ENCODE measurements at regions of chr19 and their contacts with region 1.

Region 1: GRCh38 chr19:33052352-33052972 is 12.2 kb downstream of the RHPN2 start:
- DNase-seq: peak; percentile 53 to 95
- H3K4me3 ChIP-seq: no peak overlapping the region; the same call in 1 of the 2 replicates
- H3K27ac ChIP-seq: peak overlapping the region; percentile 98
- H3K4me1 ChIP-seq: peaks cover 95% of the 10 kb centered on the region
- H3K27me3 ChIP-seq: no peaks in the 10 kb centered on the region
- CTCF ChIP-seq: no peak

Region 2: DNA sequence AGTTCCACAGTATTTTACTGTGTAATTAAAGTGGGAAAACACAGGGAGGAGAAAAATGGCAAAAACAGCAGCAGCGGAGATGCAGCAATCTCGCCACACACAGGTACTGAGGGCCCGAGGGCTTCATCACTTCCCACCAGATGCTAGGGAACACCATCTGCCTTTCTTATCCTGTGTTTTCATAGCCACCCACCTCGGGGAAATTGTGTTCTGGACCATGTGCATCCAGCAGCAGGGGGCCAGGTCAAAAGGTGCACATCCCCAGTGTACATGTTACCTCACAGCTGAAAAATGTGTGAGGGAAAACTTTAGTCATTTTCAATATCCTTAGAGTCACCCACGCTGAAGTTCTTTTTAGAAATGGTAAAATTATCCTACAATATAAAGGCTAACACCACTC is 441.3 kb before region 1 on chr19:
- CTCF ChIA-PET with region 1: no interaction called
- POLR2A ChIA-PET with region 1: no interaction called
- intact Hi-C with region 1: no loop called
- DNase-seq: no peak
- H3K4me3 ChIP-seq: no peak overlapping the region
- H3K27ac ChIP-seq: no peak overlapping the region
- H3K4me1 ChIP-seq: no peaks in the 10 kb centered on the region
- H3K27me3 ChIP-seq: no peaks in the 10 kb centered on the region
- CTCF ChIP-seq: no peak

Region 3: DNA sequence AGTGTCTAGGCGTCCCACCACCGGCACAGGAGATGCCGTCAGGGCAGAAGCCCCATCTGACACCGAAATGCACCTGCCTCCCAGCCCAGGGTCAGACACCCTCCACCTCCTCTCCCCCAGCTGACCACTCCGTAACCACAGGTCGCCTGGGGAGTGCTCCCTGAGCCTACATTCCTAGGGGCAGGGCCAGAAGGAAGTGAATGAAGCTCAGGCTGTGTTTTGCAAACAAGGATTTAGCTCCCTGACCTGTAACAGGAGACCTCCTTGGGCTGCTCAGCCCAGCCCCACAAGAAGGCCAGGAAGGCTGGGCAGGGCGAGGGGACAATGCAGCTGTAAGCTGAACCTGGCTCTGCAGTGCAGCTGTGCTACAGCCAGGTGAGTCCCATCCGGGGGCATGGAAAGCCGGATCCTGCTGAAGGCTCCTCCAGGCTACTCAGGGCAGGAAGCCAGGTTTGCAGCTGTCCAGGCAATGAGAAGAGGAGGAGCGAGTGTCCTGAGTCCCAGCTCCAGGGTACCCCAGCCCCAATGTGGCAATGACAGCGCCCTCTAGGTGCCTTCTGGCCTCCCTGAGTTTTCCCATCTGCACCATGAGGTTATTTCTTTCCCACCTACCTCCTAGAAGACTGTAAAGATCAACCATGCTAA is 29.9 kb before region 1 on chr19:
- CTCF ChIA-PET with region 1: no interaction called
- POLR2A ChIA-PET with region 1: interaction called, 11 read pairs
- intact Hi-C with region 1: loop called (anchors 1 kb)
- DNase-seq: peak; percentile 82 to 93
- H3K4me3 ChIP-seq: no peak overlapping the region
- H3K27ac ChIP-seq: peak overlapping the region; percentile 85
- H3K4me1 ChIP-seq: peaks cover 47% of the 10 kb centered on the region
- H3K27me3 ChIP-seq: no peaks in the 10 kb centered on the region
- CTCF ChIP-seq: peak; percentile 51; the same call in 1 of the 2 replicates

Region 4: DNA sequence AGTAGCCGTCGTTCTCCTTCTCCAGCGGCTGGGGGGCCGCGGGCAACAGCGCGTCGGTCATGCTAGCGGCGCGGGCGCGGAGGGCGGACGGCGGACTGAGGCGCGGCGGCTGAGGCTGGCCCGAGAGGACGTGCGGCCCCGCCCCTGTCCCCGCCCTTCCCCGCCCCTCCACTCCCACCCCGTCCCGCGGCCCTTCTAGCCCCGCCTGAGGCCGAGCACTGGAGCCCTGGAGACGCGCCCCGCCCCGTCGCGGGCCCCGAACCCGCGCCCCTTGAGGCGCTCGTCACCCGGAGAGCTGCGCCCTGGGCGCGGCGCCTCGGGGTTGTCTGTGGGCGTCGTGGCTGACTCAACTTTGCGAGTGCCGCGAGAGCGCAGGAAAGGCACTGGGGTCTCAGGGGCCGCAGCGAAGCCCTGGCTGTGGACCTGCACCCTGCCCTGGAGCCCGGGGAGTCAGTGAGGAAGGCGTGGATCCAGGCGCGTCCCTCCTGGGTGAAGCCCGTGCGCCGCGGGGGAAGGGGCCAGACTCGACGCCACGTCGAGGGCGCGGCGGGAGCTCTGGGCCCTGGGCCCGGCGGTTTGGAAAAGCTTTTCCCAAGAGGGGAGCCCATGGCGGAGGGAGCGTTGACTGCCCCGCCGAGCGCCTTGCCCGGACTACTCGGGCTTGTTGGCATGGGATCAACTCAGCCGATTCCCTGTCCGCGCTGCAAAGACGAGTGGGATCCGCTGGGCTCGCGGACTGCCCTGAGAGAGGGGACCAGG is 12.5 kb after region 1 on chr19 and contains the start of gene RHPN2:
- CTCF ChIA-PET with region 1: no interaction called
- POLR2A ChIA-PET with region 1: interaction called, 16 read pairs
- intact Hi-C with region 1: no loop called
- DNase-seq: peak; percentile 47 to 77
- H3K4me3 ChIP-seq: peak within 1 kb of the TSS; percentile 99
- H3K27ac ChIP-seq: 0 out of 2 replicates have a peak within 1 kb of the TSS, but pooled peaks have one; percentile 4
- H3K4me1 ChIP-seq: peaks cover 36% of the 10 kb centered on the region
- H3K27me3 ChIP-seq: no peaks in the 10 kb centered on the region
- CTCF ChIP-seq: no peak
- total RNA-seq, gene RHPN2: 21.3 and 28.5 TPM in 2 replicates

Region 5: GRCh38 chr19:33098023-33098652 is 45.7 kb after region 1 on chr19:
- CTCF ChIA-PET with region 1: no interaction called
- POLR2A ChIA-PET with region 1: interaction called, 5 read pairs
- intact Hi-C with region 1: loop called (anchors 1 kb)
- DNase-seq: peak; percentile 83 to 90
- H3K4me3 ChIP-seq: no peak overlapping the region
- H3K27ac ChIP-seq: peak overlapping the region; percentile 54
- H3K4me1 ChIP-seq: peaks cover 65% of the 10 kb centered on the region
- H3K27me3 ChIP-seq: no peaks in the 10 kb centered on the region
- CTCF ChIP-seq: no peak

Region 6: GRCh38 chr19:33176670-33177416 is 124.4 kb after region 1 on chr19:
- CTCF ChIA-PET with region 1: no interaction called
- POLR2A ChIA-PET with region 1: interaction called, 3 read pairs
- intact Hi-C with region 1: loop called (anchors 10 kb)
- DNase-seq: peak; percentile 94 to 98
- H3K4me3 ChIP-seq: peak overlapping the region; percentile 86
- H3K27ac ChIP-seq: peak overlapping the region; percentile 60
- H3K4me1 ChIP-seq: peaks cover 32% of the 10 kb centered on the region
- H3K27me3 ChIP-seq: no peaks in the 10 kb centered on the region
- CTCF ChIP-seq: peak; percentile 3; the same call in 1 of the 2 replicates

Measured in PC-9 (cell line).